ENCODE measurements at regions of chr10 and their contacts with region 1.

Region 1: DNA sequence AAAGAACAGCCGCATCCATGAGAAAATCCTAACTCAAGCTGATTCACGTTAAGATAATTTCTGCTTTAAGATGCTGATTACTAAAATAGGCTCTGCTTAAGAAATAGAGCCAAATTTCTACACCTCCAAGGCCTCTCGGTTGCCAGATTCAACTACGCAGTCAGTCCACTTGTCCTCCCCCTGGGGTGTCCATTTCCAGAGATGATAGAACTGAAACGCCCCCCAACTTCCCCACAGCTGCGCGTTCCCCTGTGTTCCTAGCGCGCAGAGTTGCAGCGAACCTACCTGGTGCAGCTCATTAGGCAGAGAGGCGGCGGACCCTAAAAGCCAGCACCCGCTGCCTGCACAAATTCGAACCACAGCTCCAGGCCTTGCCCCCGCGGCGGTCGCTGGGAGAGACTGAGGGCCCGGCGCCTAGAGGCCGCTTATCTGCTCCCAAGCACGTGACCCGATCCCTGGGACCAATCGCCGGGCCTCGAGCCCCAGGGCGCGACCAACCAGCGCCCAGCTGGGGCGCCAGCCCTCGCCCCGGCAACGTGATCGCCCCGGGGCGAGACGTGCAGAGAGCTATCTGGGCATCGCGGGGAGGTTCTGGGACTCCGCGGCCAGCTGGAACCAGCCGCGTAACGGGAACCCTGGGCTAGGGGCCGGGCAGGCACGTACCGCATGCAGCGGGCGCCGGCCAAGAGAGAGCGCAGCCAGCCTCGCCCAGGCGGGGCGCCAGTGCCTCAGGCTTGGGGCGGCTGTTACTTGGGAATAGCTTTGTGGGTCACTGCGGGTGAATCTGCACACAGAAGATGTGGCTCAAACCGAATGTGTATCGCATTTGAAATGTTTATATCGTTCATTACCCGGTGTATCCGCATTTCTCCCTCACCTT is at the start of gene PPP1R3C:
- DNase-seq: peak; percentile 82
- H3K4me3 ChIP-seq: peak within 1 kb of the TSS; percentile 85
- H3K27ac ChIP-seq: peak within 1 kb of the TSS; percentile 60
- H3K27me3 ChIP-seq: no peaks in the 10 kb centered on the region
- CTCF ChIP-seq: peak; percentile 49
- polyA plus RNA-seq, gene PPP1R3C: 42.2 and 51.1 TPM in 2 replicates

Region 2: GRCh38 chr10:91313796-91314485 is 319.0 kb before region 1 on chr10:
- CTCF ChIA-PET with region 1: interaction called, 10 read pairs
- POLR2A ChIA-PET with region 1: no interaction called
- DNase-seq: peak; percentile 59
- H3K4me3 ChIP-seq: no peak overlapping the region; the same call in 1 of the 2 replicates
- H3K27ac ChIP-seq: peak overlapping the region; percentile 91
- H3K27me3 ChIP-seq: peaks cover under 1% of the 10 kb centered on the region
- CTCF ChIP-seq: no peak

Region 3: GRCh38 chr10:91487911-91488582 is 144.9 kb before region 1 on chr10:
- CTCF ChIA-PET with region 1: interaction called, 105 read pairs
- POLR2A ChIA-PET with region 1: interaction called, 4 read pairs
- DNase-seq: no peak
- H3K4me3 ChIP-seq: no peak overlapping the region
- H3K27ac ChIP-seq: no peak overlapping the region
- H3K27me3 ChIP-seq: no peaks in the 10 kb centered on the region
- CTCF ChIP-seq: no peak

Region 4: DNA sequence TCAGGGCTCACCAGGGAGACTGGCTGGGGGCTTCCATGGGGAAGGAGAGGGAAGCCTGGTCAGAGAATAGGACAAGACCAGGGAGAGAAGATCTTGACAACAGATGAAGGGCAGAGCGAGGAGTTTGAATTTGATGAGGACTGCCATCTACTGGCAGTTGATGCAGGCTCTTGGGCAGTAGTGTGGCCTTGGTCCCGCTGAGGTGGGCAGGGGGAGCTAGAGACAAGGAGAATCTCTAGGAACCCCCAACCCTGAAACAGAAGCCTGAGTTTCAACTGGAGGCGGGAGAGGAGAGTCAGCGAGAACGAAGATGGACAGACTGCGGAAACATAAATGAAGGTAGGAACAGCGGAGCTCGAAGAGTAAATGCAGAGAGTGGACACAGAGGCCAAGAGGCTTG is 81.1 kb before region 1 on chr10:
- CTCF ChIA-PET with region 1: interaction called, 48 read pairs
- POLR2A ChIA-PET with region 1: interaction called, 4 read pairs
- DNase-seq: peak; percentile 34
- H3K4me3 ChIP-seq: no peak overlapping the region
- H3K27ac ChIP-seq: no peak overlapping the region
- H3K27me3 ChIP-seq: no peaks in the 10 kb centered on the region
- CTCF ChIP-seq: peak; percentile 89

Region 5: DNA sequence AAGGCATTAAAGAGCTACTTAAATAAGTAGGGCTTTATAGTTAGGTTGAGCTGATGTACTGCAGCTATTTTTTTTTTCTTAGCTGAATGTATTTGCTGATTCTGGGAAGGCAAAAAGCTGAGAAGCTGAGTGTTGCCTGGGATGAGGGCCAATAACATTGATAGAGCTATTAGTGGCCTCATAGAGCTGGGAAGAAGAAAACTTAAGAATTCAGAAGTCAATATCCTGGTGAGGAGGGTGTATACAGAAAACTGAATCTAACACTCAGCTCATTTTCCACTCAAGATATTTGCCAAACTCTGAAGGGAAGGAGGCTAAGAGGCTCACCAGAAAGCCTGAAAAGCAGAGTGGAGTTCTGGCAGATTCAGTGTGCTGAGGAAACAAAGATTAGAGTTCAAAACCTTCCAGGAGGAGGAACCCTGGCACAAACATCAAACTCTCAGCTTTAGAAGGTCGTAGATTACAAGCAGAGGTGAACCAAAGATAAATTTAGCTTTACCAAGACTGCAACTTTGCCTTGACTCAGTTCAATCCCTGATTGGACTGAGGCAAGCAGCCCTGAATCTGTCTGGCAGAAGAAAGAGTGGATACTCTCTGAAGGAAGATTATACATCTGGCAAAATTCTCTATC is 11.3 kb before region 1 on chr10:
- CTCF ChIA-PET with region 1: interaction called, 21 read pairs
- POLR2A ChIA-PET with region 1: interaction called, 27 read pairs
- DNase-seq: no peak
- H3K4me3 ChIP-seq: no peak overlapping the region
- H3K27ac ChIP-seq: no peak overlapping the region
- H3K27me3 ChIP-seq: no peaks in the 10 kb centered on the region
- CTCF ChIP-seq: no peak

Region 6: GRCh38 chr10:91659887-91660286 is 27.0 kb after region 1 on chr10:
- CTCF ChIA-PET with region 1: interaction called, 12 read pairs
- POLR2A ChIA-PET with region 1: interaction called, 4 read pairs
- DNase-seq: no peak
- H3K4me3 ChIP-seq: no peak overlapping the region
- H3K27ac ChIP-seq: no peak overlapping the region
- H3K27me3 ChIP-seq: no peaks in the 10 kb centered on the region
- CTCF ChIP-seq: no peak

Region 7: DNA sequence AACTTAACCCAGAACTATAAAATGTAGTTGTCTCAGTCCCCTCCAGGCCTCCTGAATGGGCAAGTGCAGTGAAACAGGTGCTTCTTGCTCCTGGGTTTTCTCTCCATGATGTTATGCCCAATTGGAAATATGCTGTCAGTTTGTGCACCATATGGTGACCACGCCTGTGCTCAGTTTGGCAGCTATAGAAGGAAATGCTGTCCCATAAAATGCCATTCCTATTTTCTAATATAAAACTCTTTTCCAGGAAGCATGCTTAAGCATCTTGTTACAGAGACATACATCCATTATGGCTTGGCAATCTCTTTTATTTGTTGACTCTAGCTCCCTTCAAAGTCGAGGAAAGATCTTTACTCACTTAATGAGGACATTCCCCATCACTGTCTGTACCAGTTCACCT is 231.2 kb after region 1 on chr10:
- CTCF ChIA-PET with region 1: no interaction called
- POLR2A ChIA-PET with region 1: no interaction called
- DNase-seq: no peak
- H3K4me3 ChIP-seq: no peak overlapping the region
- H3K27ac ChIP-seq: no peak overlapping the region
- H3K27me3 ChIP-seq: no peaks in the 10 kb centered on the region
- CTCF ChIP-seq: no peak

Region 8: GRCh38 chr10:91908337-91909116 is 275.6 kb after region 1 on chr10:
- CTCF ChIA-PET with region 1: interaction called, 13 read pairs
- POLR2A ChIA-PET with region 1: no interaction called
- DNase-seq: no peak
- H3K4me3 ChIP-seq: peak overlapping the region; percentile 72
- H3K27ac ChIP-seq: no peak overlapping the region
- H3K27me3 ChIP-seq: no peaks in the 10 kb centered on the region
- CTCF ChIP-seq: peak; percentile 20; the same call in 1 of the 2 replicates

Region 9: DNA sequence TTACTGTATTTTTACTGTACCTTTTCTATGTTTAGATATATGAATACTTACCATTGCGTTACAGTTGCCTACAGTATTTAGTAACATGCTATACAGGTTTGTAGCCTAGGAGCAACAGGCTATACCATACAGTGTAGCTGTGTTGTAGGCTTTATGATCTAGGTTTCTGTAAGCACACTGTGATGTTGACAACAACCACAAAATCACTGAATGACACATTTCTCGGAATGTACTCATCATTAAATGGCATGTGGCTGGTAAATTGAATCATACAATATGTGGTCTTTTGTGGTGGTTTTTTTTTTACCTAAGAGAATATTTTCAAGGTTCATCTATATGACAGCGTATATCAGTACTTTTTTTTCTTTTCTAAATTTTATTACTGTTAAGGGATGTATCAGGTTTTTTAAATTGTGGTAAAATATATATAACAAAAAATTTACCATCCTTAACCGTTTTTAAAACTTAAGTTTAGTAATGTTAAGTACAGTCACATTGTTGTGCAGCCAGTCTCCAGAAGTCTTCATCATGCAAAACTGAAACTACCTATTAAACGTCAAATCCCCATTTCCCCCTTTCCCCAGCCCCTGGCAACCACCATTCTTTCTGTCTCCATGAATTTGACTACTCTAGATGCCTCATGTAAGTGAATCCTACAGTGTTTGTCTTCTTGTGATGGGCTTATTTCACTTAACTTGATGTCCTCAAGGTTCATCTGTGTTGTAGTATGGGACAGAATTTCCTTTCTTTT is 312.1 kb after region 1 on chr10:
- CTCF ChIA-PET with region 1: no interaction called
- POLR2A ChIA-PET with region 1: no interaction called
- DNase-seq: no peak
- H3K4me3 ChIP-seq: no peak overlapping the region
- H3K27ac ChIP-seq: no peak overlapping the region
- H3K27me3 ChIP-seq: no peaks in the 10 kb centered on the region
- CTCF ChIP-seq: no peak

Region 10: GRCh38 chr10:92822060-92822634 is 1189.2 kb after region 1 on chr10:
- CTCF ChIA-PET with region 1: no interaction called
- POLR2A ChIA-PET with region 1: no interaction called
- DNase-seq: peak; percentile 73
- H3K4me3 ChIP-seq: no peak overlapping the region
- H3K27ac ChIP-seq: peak overlapping the region; percentile 92
- H3K27me3 ChIP-seq: no peaks in the 10 kb centered on the region
- CTCF ChIP-seq: no peak